ENCODE measurements at regions of chr4 and their contacts with region 1.

Region 1: DNA sequence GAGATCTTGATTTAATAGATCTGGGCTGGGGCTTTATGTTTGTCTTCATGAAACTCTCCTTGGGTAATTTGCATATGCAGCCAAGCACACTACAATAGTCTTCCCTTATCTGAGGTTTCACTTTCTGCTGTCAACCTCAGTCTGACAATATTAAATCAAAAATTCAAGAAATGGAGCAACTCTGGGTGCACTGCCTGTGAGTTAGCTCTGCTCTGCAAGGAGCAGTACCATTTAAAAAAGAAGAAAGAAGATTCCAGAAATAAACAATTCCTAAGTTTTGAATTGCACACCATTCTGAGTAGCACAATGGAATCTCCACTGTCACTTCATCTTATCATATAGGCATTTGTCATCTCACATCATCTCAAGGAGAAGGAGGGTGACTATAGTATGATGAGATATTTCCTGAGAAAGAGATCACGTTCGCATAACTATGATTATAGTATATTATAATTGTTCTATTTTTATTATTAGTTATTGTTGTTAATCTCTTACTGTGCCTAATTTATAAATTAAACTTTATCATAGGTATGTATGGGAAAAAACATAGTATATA is 9.4 kb downstream of the FNIP2 start:
- DNase-seq: peak in 3 of 5 donors; percentile 9 to 17 (median 10)
- H3K4me3 ChIP-seq: peak overlapping the region in 1 of 2 donors; percentile 7
- H3K4me3 Mint-ChIP-seq: peak overlapping the region; percentile 54 to 89 (median 76)
- H3K27ac ChIP-seq: no peak overlapping the region
- H3K27ac Mint-ChIP-seq: peak overlapping the region in 6 of 7 donors; percentile 3 to 84 (median 74)
- H3K4me1 ChIP-seq: peaks cover 20% of the 10 kb centered on the region
- H3K4me1 Mint-ChIP-seq: peaks cover 19 to 39% (median 26%) of the 10 kb centered on the region in 4 donors
- H3K27me3 ChIP-seq: no peaks in the 10 kb centered on the region
- H3K27me3 Mint-ChIP-seq: no peaks in the 10 kb centered on the region

Region 2: GRCh38 chr4:158729716-158730559 is 48.3 kb before region 1 on chr4:
- CTCF ChIA-PET with region 1: no interaction called
- POLR2A ChIA-PET with region 1: no interaction called
- intact Hi-C with region 1: no loop called
- DNase-seq: peak in 4 of 5 donors; percentile 51 to 55 (median 54)
- H3K4me3 ChIP-seq: no peak overlapping the region
- H3K4me3 Mint-ChIP-seq: no peak overlapping the region
- H3K27ac ChIP-seq: no peak overlapping the region
- H3K27ac Mint-ChIP-seq: no peak overlapping the region
- H3K4me1 ChIP-seq: no peaks in the 10 kb centered on the region
- H3K4me1 Mint-ChIP-seq: peaks cover 0 to 1% (median 0%) of the 10 kb centered on the region in 4 donors
- H3K27me3 ChIP-seq: peaks cover 5% of the 10 kb centered on the region
- H3K27me3 Mint-ChIP-seq: peaks cover 21 to 22% of the 10 kb centered on the region in 2 donors

Region 3: GRCh38 chr4:158809611-158810486 is 31.6 kb after region 1 on chr4:
- CTCF ChIA-PET with region 1: no interaction called
- POLR2A ChIA-PET with region 1: no interaction called
- intact Hi-C with region 1: loop called (anchors 5 kb)
- DNase-seq: peak in 4 of 5 donors; percentile 19 to 41 (median 28)
- H3K4me3 ChIP-seq: no peak overlapping the region
- H3K4me3 Mint-ChIP-seq: peak overlapping the region; percentile 17 to 83 (median 68)
- H3K27ac ChIP-seq: no peak overlapping the region
- H3K27ac Mint-ChIP-seq: peak overlapping the region; percentile 32 to 89 (median 75)
- H3K4me1 ChIP-seq: peaks cover 27% of the 10 kb centered on the region
- H3K4me1 Mint-ChIP-seq: peaks cover 22 to 41% (median 33%) of the 10 kb centered on the region in 4 donors
- H3K27me3 ChIP-seq: no peaks in the 10 kb centered on the region
- H3K27me3 Mint-ChIP-seq: no peaks in the 10 kb centered on the region

Measured in CD4-positive, alpha-beta memory T cell (primary cell).